ENCODE measurements at regions of chr21 and their contacts with region 1.

Region 1: DNA sequence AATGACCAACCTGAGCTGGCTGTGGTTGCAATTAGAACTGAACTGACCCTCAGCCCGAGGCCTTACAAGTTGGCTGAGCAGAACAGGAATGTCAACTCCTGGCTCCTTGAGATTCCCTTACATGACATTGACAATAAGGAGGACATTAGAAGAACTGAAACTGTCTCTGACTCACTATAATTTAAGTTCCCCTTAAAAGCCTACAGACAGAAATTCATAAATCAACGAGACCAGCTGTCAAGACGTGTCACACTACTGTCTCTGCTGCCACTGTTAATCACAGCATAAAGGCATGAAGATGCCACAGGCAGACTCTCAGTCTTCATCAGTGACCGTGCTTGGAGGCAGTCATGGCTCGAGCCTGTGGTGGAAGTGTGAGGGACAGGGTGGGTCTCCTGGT is 168.8 kb downstream of the GABPA start:
- DNase-seq: no peak
- H3K4me3 ChIP-seq: no peak overlapping the region
- H3K27ac ChIP-seq: no peak overlapping the region
- H3K4me1 ChIP-seq: peaks cover 2 to 11% (median 7%) of the 10 kb centered on the region in 4 donors
- H3K27me3 ChIP-seq: no peaks in the 10 kb centered on the region
- CTCF ChIP-seq: no peak
- EP300 ChIP-seq: no peak
- POLR2A ChIP-seq: no peak

Region 2: GRCh38 chr21:25956993-25957714 is 53.6 kb after region 1 on chr21:
- intact Hi-C with region 1: loop called (anchors 10 kb)
- DNase-seq: no peak
- H3K4me3 ChIP-seq: no peak overlapping the region
- H3K27ac ChIP-seq: no peak overlapping the region
- H3K4me1 ChIP-seq: peaks cover 0 to 10% (median 5%) of the 10 kb centered on the region in 4 donors
- H3K27me3 ChIP-seq: no peaks in the 10 kb centered on the region
- CTCF ChIP-seq: no peak
- EP300 ChIP-seq: no peak
- POLR2A ChIP-seq: no peak

Measured in esophagus muscularis mucosa (tissue), 4 donors.